HCT116 (cell line): ENCODE measurements at regions of chr11 and their contacts with region 1.

Region 1: DNA sequence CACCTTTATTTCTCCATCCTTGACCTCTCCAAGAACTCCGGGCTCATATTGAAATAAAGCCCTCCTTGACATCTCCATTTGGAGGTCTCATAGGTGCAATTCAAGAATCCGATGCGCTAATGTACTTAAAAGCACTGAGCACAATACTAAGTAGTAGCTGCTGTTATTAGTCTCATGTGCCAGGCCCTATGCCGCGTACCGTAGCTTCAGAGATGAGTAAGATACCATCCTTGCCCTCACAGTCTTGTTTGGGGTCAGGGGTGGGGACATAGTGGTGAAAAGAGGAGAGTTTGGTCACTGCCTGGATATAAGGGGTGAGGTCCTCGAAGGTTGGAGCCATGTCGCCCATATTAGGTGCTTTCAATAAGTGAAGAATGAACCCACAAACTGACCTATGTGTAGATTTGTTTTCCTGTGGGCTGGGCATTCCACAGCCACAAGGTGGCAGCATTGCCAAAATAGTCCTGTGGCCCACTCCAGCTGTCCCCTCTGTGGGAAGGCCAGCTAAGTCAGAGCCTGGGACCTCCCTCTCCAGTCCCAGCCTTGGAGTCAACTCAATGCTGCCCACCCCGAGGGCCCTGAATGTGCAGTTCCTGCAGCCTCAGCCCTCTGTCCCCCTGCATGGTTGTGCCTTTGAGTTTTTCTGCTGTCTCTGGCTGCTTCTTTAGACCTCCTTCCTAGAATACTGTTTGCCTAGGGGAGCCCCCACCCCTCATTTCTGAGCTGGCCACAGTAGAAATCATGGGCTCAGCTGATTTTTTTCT is 6.5 kb downstream of the DCPS start:
- DNase-seq: peak; percentile 42
- ATAC-seq: peak; percentile 93
- H3K4me3 ChIP-seq: no peak overlapping the region
- H3K27ac ChIP-seq: no peak overlapping the region
- H3K4me1 ChIP-seq: peaks cover 0 to 3% of the 10 kb centered on the region in 2 experiments; a peak in 3 of 4 replicates
- H3K27me3 ChIP-seq: no peaks in the 10 kb centered on the region
- CTCF ChIP-seq: peak; percentile 75 to 88 (median 85)
- POLR2A ChIP-seq: no peak
- RAD21 ChIP-seq: peak; percentile 96

Region 2: GRCh38 chr11:126391970-126392639 is 81.7 kb after region 1 on chr11:
- CTCF ChIA-PET with region 1: no interaction called
- POLR2A ChIA-PET with region 1: no interaction called
- RAD21 ChIA-PET with region 1: no interaction called
- intact Hi-C with region 1: loop called (anchors 2 kb)
- DNase-seq: no peak
- ATAC-seq: peak; percentile 74
- H3K4me3 ChIP-seq: no peak overlapping the region
- H3K27ac ChIP-seq: no peak overlapping the region
- H3K4me1 ChIP-seq: no peaks in the 10 kb centered on the region
- H3K27me3 ChIP-seq: no peaks in the 10 kb centered on the region
- CTCF ChIP-seq: peak; percentile 9 to 29 (median 23); a peak in 1 of 6 replicates
- POLR2A ChIP-seq: no peak
- RAD21 ChIP-seq: peak; percentile 50

Region 3: GRCh38 chr11:126480410-126481302 is 170.2 kb after region 1 on chr11:
- CTCF ChIA-PET with region 1: interaction called, 74 read pairs
- POLR2A ChIA-PET with region 1: no interaction called
- RAD21 ChIA-PET with region 1: interaction called, 7 to 10 read pairs
- intact Hi-C with region 1: loop called (anchors 1 kb)
- DNase-seq: peak; percentile 79
- ATAC-seq: peak; percentile 90
- H3K4me3 ChIP-seq: no peak overlapping the region
- H3K27ac ChIP-seq: no peak overlapping the region
- H3K4me1 ChIP-seq: peaks cover 2 to 7% of the 10 kb centered on the region in 2 experiments; a peak in 3 of 4 replicates
- H3K27me3 ChIP-seq: no peaks in the 10 kb centered on the region
- CTCF ChIP-seq: peak; percentile 83 to 96 (median 95)
- POLR2A ChIP-seq: no peak
- RAD21 ChIP-seq: peak; percentile 81

Region 4: GRCh38 chr11:126607374-126607773 is 297.0 kb after region 1 on chr11:
- CTCF ChIA-PET with region 1: interaction called, 7 read pairs
- POLR2A ChIA-PET with region 1: no interaction called
- RAD21 ChIA-PET with region 1: no interaction called
- intact Hi-C with region 1: loop called (anchors 10 kb)
- DNase-seq: peak; percentile 31
- ATAC-seq: peak; percentile 99
- H3K4me3 ChIP-seq: peak overlapping the region in 1 of 2 experiments; percentile 20; a peak in 1 of 4 replicates
- H3K27ac ChIP-seq: no peak overlapping the region
- H3K4me1 ChIP-seq: peaks cover 0 to 4% of the 10 kb centered on the region in 2 experiments; a peak in 2 of 4 replicates
- H3K27me3 ChIP-seq: peaks cover 24% of the 10 kb centered on the region; the same call in 1 of the 2 replicates
- CTCF ChIP-seq: peak; percentile 55 to 83 (median 82)
- POLR2A ChIP-seq: no peak
- RAD21 ChIP-seq: peak; percentile 86

Region 5: DNA sequence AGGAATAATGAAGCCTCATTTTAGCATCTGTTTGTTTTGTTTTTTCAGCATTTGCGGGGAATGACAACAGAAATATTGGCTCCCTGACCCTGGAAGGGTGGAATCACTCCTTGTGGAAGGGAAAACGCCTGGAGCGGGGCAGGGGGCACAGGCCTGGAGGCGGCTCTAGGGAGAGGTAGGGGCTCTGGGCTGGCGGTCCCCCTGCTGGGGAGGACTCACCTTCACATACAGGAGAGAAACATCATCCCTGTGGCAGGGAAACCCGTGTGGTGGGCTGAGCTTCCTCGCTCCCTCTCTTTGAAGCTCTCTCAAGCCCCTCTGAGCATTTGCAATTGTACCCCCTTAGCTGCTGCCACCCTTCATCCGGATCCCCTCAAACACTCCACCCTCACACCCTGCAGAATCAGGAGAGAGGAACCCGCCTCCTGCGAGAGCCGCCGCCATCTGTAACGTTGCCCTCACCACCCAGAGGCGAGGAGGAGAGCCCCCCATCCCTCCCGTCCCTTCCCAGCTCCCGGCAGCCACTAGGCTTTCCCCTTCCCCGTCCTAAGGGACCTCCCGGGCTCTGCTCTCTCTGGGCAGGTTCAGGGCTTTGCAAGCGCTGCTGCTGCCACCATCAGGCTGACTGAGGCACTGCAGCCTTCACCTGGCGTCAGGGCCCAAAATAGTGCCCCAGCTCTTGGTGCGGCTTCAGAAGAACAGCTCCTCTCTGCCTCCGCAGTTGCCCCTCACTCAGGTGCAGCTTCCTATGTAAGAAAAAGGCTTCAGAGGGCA is 679.7 kb after region 1 on chr11:
- CTCF ChIA-PET with region 1: interaction called, 3 read pairs
- POLR2A ChIA-PET with region 1: no interaction called
- RAD21 ChIA-PET with region 1: no interaction called
- intact Hi-C with region 1: loop called (anchors 2 kb)
- DNase-seq: peak; percentile 18
- ATAC-seq: peak; percentile 97
- H3K4me3 ChIP-seq: no peak overlapping the region
- H3K27ac ChIP-seq: no peak overlapping the region
- H3K4me1 ChIP-seq: no peaks in the 10 kb centered on the region
- H3K27me3 ChIP-seq: 0 out of 2 replicates have a peak, but pooled peaks cover 6% of the 10 kb centered on the region
- CTCF ChIP-seq: peak; percentile 49 to 96 (median 85); a peak in 5 of 6 replicates
- POLR2A ChIP-seq: no peak
- RAD21 ChIP-seq: peak; percentile 82